ENCODE measurements at regions of chr2 and their contacts with region 1.

Region 1: GRCh38 chr2:119659601-119660342 is 19.2 kb upstream of the TMEM177 start:
- DNase-seq: peak; percentile 32
- ATAC-seq: peak; percentile 59
- H3K4me3 ChIP-seq: no peak overlapping the region
- H3K27ac ChIP-seq: no peak overlapping the region
- H3K4me1 ChIP-seq: no peaks in the 10 kb centered on the region
- H3K27me3 ChIP-seq: peaks cover 13% of the 10 kb centered on the region
- CTCF ChIP-seq: peak; percentile 75
- POLR2A ChIP-seq: no peak
- RAD21 ChIP-seq: peak; percentile 77

Region 2: DNA sequence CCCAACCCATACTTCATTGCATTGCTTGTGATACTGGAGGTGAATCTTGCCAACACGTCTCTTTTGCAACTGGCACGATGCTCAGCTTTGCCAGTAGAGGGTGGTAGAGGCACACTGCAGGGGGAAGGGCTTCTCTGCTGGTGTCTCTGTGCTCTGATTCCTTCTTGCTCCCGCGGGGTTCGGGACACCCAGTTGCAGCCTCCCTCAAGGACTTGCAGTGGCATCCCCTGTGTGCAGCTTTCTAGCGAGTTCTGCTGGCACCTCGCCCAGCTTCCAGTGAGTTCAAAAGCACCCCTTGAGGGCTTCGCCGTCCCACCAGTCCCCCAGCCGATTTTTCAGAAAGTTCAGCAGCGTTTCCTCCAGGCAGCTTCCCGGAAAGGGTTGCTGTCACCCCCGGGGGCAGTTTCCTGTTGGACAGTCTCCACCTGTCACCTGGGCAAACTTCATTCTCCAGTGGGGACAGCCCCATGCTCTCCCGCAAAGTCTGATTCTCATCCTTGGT is 777.0 kb before region 1 on chr2:
- CTCF ChIA-PET with region 1: no interaction called
- POLR2A ChIA-PET with region 1: no interaction called
- dilution Hi-C with region 1: no loop called
- in situ Hi-C with region 1: no loop called
- intact Hi-C with region 1: loop called (anchors 5 kb)
- DNase-seq: peak; percentile 38
- ATAC-seq: peak; percentile 86
- H3K4me3 ChIP-seq: no peak overlapping the region
- H3K27ac ChIP-seq: no peak overlapping the region
- H3K4me1 ChIP-seq: no peaks in the 10 kb centered on the region
- H3K27me3 ChIP-seq: no peaks in the 10 kb centered on the region; the same call in 1 of the 2 replicates
- CTCF ChIP-seq: peak; percentile 72
- POLR2A ChIP-seq: no peak
- RAD21 ChIP-seq: peak; percentile 64

Region 3: GRCh38 chr2:119407430-119408220 is 252.1 kb before region 1 on chr2:
- CTCF ChIA-PET with region 1: no interaction called
- POLR2A ChIA-PET with region 1: no interaction called
- dilution Hi-C with region 1: no loop called
- in situ Hi-C with region 1: no loop called
- intact Hi-C with region 1: loop called (anchors 1 kb)
- DNase-seq: peak; percentile 58
- ATAC-seq: peak; percentile 97
- H3K4me3 ChIP-seq: no peak overlapping the region
- H3K27ac ChIP-seq: no peak overlapping the region
- H3K4me1 ChIP-seq: no peaks in the 10 kb centered on the region
- H3K27me3 ChIP-seq: no peaks in the 10 kb centered on the region; the same call in 1 of the 2 replicates
- CTCF ChIP-seq: peak; percentile 91
- POLR2A ChIP-seq: no peak
- RAD21 ChIP-seq: peak; percentile 85

Region 4: GRCh38 chr2:119476301-119477021 is 183.3 kb before region 1 on chr2:
- CTCF ChIA-PET with region 1: no interaction called
- POLR2A ChIA-PET with region 1: no interaction called
- dilution Hi-C with region 1: no loop called
- in situ Hi-C with region 1: no loop called
- intact Hi-C with region 1: no loop called
- DNase-seq: peak; percentile 36
- ATAC-seq: peak; percentile 95
- H3K4me3 ChIP-seq: no peak overlapping the region
- H3K27ac ChIP-seq: no peak overlapping the region
- H3K4me1 ChIP-seq: no peaks in the 10 kb centered on the region
- H3K27me3 ChIP-seq: peaks cover 23% of the 10 kb centered on the region
- CTCF ChIP-seq: peak; percentile 78
- POLR2A ChIP-seq: no peak
- RAD21 ChIP-seq: peak; percentile 84

Region 5: DNA sequence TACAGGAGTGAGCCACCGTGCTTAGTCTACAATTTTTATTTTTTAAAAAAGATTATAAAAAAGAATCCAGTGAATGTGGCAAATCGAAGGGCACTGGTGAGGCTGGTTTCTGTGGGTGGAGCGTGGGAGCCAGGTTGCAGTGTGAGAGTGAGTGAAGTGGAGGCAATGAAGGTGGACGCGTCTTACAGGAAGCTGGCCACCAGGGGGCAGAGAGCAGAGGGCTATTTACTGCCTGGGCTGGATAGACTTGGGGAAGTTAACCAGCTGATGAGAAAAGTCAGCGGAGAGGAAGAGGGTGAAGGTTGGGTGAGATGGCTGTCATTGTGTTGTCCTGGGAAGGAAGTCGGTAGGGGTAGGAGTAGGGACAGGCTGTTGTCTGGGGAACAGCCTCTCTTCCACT is 142.3 kb before region 1 on chr2:
- CTCF ChIA-PET with region 1: no interaction called
- POLR2A ChIA-PET with region 1: no interaction called
- dilution Hi-C with region 1: no loop called
- in situ Hi-C with region 1: no loop called
- intact Hi-C with region 1: loop called (anchors 1 kb)
- DNase-seq: peak; percentile 21
- ATAC-seq: peak; percentile 77
- H3K4me3 ChIP-seq: no peak overlapping the region
- H3K27ac ChIP-seq: no peak overlapping the region
- H3K4me1 ChIP-seq: no peaks in the 10 kb centered on the region
- H3K27me3 ChIP-seq: peaks cover 2% of the 10 kb centered on the region; the same call in 1 of the 2 replicates
- CTCF ChIP-seq: peak; percentile 46
- POLR2A ChIP-seq: no peak
- RAD21 ChIP-seq: peak; percentile 28; the same call in 1 of the 2 replicates

Region 6: GRCh38 chr2:119617455-119617854 is 42.3 kb before region 1 on chr2:
- CTCF ChIA-PET with region 1: no interaction called
- POLR2A ChIA-PET with region 1: no interaction called
- dilution Hi-C with region 1: no loop called
- in situ Hi-C with region 1: no loop called
- intact Hi-C with region 1: no loop called
- DNase-seq: no peak
- ATAC-seq: no peak
- H3K4me3 ChIP-seq: no peak overlapping the region
- H3K27ac ChIP-seq: no peak overlapping the region
- H3K4me1 ChIP-seq: no peaks in the 10 kb centered on the region
- H3K27me3 ChIP-seq: peaks cover 2% of the 10 kb centered on the region; the same call in 1 of the 2 replicates
- CTCF ChIP-seq: no peak
- POLR2A ChIP-seq: no peak
- RAD21 ChIP-seq: no peak

Region 7: GRCh38 chr2:119641562-119642258 is 18.1 kb before region 1 on chr2:
- CTCF ChIA-PET with region 1: interaction called, 4 read pairs
- POLR2A ChIA-PET with region 1: no interaction called
- dilution Hi-C with region 1: no loop called
- in situ Hi-C with region 1: no loop called
- intact Hi-C with region 1: loop called (anchors 1 kb)
- DNase-seq: peak; percentile 71
- ATAC-seq: peak; percentile 96
- H3K4me3 ChIP-seq: no peak overlapping the region
- H3K27ac ChIP-seq: no peak overlapping the region
- H3K4me1 ChIP-seq: no peaks in the 10 kb centered on the region
- H3K27me3 ChIP-seq: peaks cover 21% of the 10 kb centered on the region
- CTCF ChIP-seq: peak; percentile 94
- POLR2A ChIP-seq: no peak
- RAD21 ChIP-seq: peak; percentile 86